Ovary (tissue), 10 donors: ENCODE measurements at regions of chr10 and their contacts with region 1.

Region 1: GRCh38 chr10:79615577-79615976 is 4.8 kb downstream of the SFTPA1 start:
- DNase-seq: no peak
- H3K4me3 ChIP-seq: no peak overlapping the region
- H3K27ac ChIP-seq: no peak overlapping the region
- H3K4me1 ChIP-seq: no peaks in the 10 kb centered on the region
- H3K27me3 ChIP-seq: no peaks in the 10 kb centered on the region
- CTCF ChIP-seq: no peak
- EP300 ChIP-seq: no peak
- POLR2A ChIP-seq: no peak

Region 2: DNA sequence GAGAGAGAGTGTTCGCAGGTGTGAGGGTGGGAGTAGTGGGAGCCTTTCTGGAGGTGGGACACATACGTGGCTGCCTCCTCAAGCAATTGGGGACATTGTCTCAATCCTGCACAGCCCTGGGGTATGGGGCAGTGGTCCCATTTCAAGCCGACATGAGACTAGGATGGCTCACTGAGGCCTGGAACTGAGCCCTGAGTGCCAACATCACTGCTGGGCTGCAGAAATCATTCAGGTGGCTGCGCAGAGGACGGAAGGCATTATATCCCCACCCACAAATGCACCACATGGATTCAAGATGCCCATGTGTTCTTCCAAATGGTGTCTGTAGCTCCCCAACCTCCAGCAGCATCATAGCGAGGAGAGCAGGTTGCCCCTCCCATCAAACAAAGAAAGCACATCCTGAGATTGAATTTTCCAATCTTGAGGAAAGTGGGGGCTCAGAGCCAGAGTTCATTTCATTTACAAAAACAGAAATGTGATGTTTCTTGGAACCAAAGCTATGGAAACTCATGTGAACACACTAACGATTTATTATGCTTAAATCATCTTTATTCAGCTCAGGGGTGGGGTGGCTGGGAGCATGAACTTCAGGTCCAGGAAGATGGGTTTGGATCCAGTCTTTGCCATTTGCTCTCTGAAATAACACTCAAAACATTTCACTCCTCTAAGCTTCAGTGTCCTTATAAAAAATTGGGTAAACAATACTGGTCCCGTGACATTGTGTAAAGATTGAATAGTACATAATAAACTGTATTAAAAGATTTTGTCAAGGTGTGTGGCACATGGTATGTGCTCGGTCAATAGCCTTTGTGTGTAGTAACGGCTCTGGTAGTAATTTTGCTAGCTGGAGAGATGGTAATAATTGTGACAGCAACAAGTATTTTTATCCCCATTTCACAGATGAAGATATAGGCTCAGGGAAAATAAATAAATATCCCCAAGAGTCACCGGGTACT is 59.9 kb before region 1 on chr10:
- intact Hi-C with region 1: loop called in 1 of 4 experiments (anchors 2 kb)
- DNase-seq: no peak
- H3K4me3 ChIP-seq: no peak overlapping the region
- H3K27ac ChIP-seq: no peak overlapping the region
- H3K4me1 ChIP-seq: no peaks in the 10 kb centered on the region
- H3K27me3 ChIP-seq: no peaks in the 10 kb centered on the region
- CTCF ChIP-seq: no peak
- EP300 ChIP-seq: no peak
- POLR2A ChIP-seq: no peak